ENCODE measurements at regions of chr5 and their contacts with region 1.

Region 1: DNA sequence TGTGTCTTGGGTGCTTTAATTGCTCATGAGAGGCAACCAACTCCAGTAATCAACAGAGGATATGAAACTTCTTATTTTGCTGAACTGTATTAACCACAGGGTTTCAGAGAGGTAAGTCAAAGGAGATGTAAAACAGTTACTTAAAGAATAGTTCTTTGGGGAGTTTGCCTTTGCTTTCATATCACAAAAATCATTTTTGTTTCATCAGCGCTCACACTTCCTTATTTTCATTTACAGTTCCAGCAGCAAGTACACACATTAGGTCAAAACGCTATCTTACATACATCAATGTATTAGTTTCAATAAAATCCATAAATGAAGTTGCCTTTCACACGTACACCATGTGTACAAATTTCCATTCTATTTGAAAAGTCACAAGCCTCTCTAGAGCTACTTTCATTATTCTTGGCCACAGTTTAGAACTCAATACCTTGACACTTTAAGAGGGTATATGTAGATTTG is 50.1 kb downstream of the ST8SIA4 start:
- DNase-seq: no peak
- H3K4me3 ChIP-seq: no peak overlapping the region
- H3K4me3 Mint-ChIP-seq: peak overlapping the region; percentile 8 to 70 (median 56)
- H3K27ac ChIP-seq: peak overlapping the region; percentile 27
- H3K27ac Mint-ChIP-seq: peak overlapping the region; percentile 54 to 86 (median 77)
- H3K4me1 ChIP-seq: peaks cover 51% of the 10 kb centered on the region
- H3K4me1 Mint-ChIP-seq: peaks cover 31 to 42% (median 34%) of the 10 kb centered on the region in 4 donors
- H3K27me3 ChIP-seq: no peaks in the 10 kb centered on the region
- H3K27me3 Mint-ChIP-seq: no peaks in the 10 kb centered on the region

Region 2: DNA sequence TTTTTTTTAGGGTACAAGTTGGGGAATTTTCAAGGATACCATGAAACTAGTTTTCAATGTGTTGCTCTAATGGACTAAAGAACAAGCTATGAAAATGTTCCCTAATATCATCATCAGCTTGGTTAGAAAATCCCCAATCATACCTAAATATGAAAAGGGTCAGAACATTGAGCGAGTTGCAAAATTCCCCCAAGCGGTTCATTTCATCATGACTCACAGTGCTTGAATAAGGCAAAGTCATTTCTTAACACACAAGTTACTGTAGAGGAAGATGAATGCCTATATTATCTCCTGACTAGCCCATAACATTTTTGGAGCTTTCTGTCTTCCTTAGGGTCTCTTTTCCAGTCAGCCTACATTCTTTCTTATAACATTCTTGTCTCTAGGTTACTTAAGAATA is 12.6 kb before region 1 on chr5:
- CTCF ChIA-PET with region 1: interaction called, 9 read pairs
- POLR2A ChIA-PET with region 1: interaction called, 6 read pairs
- intact Hi-C with region 1: loop called (anchors 2 kb)
- DNase-seq: peak in 1 of 5 donors; percentile 59
- H3K4me3 ChIP-seq: no peak overlapping the region
- H3K4me3 Mint-ChIP-seq: peak overlapping the region in 5 of 8 donors; percentile 79 to 91 (median 84)
- H3K27ac ChIP-seq: no peak overlapping the region
- H3K27ac Mint-ChIP-seq: peak overlapping the region in 6 of 7 donors; percentile 33 to 90 (median 74)
- H3K4me1 ChIP-seq: peaks cover 65% of the 10 kb centered on the region
- H3K4me1 Mint-ChIP-seq: peaks cover 49 to 74% (median 56%) of the 10 kb centered on the region in 4 donors
- H3K27me3 ChIP-seq: no peaks in the 10 kb centered on the region
- H3K27me3 Mint-ChIP-seq: no peaks in the 10 kb centered on the region

Measured in CD4-positive, alpha-beta memory T cell (primary cell).